GM12878 (cell line): ENCODE measurements at regions of chr2 and their contacts with region 1.

Region 1: DNA sequence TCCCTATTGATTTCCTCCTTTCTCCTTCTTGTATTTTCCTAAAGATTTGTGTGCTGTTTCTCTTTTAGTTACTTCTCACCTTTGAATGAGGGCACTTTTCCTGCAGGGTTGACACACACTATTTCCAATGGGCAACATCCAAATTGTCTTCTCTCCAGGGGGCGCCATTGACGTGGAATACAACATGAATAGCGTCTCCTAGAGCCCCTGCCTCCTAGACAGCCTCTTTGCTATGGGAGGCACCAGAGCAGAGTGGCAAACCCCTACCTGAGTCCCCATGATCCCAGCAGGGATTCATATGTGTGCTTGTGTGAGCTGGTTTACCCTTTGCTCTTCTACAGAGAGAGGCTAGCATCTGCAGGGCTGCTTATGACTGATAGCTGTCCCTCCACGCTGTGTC is 61.3 kb upstream of the ITSN2 start:
- DNase-seq: no peak
- ATAC-seq: peak; percentile 88
- H3K4me3 ChIP-seq: no peak overlapping the region
- H3K27ac ChIP-seq: no peak overlapping the region
- H3K4me1 ChIP-seq: no peaks in the 10 kb centered on the region
- H3K27me3 ChIP-seq: no peaks in the 10 kb centered on the region; a peak in 1 of 4 replicates
- CTCF ChIP-seq: peak; percentile 45 to 68 (median 60); a peak in 5 of 6 replicates
- EP300 ChIP-seq: no peak
- POLR2A ChIP-seq: no peak
- RAD21 ChIP-seq: peak; percentile 71

Region 2: GRCh38 chr2:24435391-24436316 is 14.0 kb after region 1 on chr2:
- CTCF ChIA-PET with region 1: interaction called, 29 read pairs
- POLR2A ChIA-PET with region 1: no interaction called
- RAD21 ChIA-PET with region 1: interaction called, 7 read pairs
- SMC1A ChIA-PET with region 1: interaction called, 20 read pairs
- in situ Hi-C with region 1: no loop called
- intact Hi-C with region 1: no loop called
- DNase-seq: no peak
- ATAC-seq: no peak
- H3K4me3 ChIP-seq: no peak overlapping the region
- H3K27ac ChIP-seq: no peak overlapping the region
- H3K4me1 ChIP-seq: no peaks in the 10 kb centered on the region
- H3K27me3 ChIP-seq: no peaks in the 10 kb centered on the region
- CTCF ChIP-seq: no peak
- EP300 ChIP-seq: no peak
- POLR2A ChIP-seq: no peak
- RAD21 ChIP-seq: no peak

Region 3: GRCh38 chr2:24527536-24527935 is 105.9 kb after region 1 on chr2:
- CTCF ChIA-PET with region 1: no interaction called
- POLR2A ChIA-PET with region 1: no interaction called
- RAD21 ChIA-PET with region 1: no interaction called
- SMC1A ChIA-PET with region 1: no interaction called
- in situ Hi-C with region 1: no loop called
- intact Hi-C with region 1: no loop called
- DNase-seq: no peak
- ATAC-seq: no peak
- H3K4me3 ChIP-seq: no peak overlapping the region
- H3K27ac ChIP-seq: no peak overlapping the region
- H3K4me1 ChIP-seq: no peaks in the 10 kb centered on the region
- H3K27me3 ChIP-seq: no peaks in the 10 kb centered on the region
- CTCF ChIP-seq: no peak
- EP300 ChIP-seq: no peak
- POLR2A ChIP-seq: no peak
- RAD21 ChIP-seq: no peak

Region 4: DNA sequence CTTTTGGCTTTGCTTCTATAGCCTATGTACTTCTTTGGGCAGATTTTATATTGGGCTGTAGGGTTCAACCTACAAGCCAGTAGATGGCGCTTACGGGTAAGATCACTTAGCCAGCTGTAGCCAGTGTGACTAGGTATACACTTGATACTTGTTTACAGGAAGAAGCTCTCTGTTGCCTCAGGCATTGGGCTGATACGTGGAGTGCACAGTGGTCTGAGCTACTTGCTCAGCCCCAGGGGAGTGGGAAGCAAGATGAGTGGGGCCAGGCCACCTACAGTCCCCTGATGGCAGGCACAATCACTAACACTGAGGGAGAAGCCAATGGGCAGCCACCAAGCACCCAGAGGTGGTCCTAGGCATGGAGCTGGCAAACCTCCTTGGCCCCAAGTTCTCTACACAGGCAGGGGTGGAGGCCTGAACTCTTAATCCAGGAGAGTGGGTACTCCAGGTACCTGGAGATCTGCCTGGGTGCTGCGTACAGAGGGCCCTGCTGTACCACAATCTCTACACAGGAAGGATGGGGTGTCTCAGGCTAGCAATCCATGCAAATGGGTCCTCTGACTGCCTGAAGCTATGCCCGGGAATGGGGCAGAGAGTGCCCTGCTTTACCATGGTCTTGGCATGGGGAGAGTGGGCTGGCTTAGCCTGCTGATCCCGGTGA is 191.6 kb after region 1 on chr2:
- CTCF ChIA-PET with region 1: interaction called, 25 read pairs
- POLR2A ChIA-PET with region 1: no interaction called
- RAD21 ChIA-PET with region 1: interaction called, 4 read pairs
- SMC1A ChIA-PET with region 1: interaction called, 13 read pairs
- in situ Hi-C with region 1: no loop called
- intact Hi-C with region 1: no loop called
- DNase-seq: peak; percentile 32
- ATAC-seq: peak; percentile 96
- H3K4me3 ChIP-seq: no peak overlapping the region
- H3K27ac ChIP-seq: peak overlapping the region; percentile 17
- H3K4me1 ChIP-seq: peaks cover 15% of the 10 kb centered on the region
- H3K27me3 ChIP-seq: no peaks in the 10 kb centered on the region
- CTCF ChIP-seq: peak; percentile 52 to 69 (median 59)
- EP300 ChIP-seq: no peak
- POLR2A ChIP-seq: no peak
- RAD21 ChIP-seq: peak; percentile 64

Region 5: GRCh38 chr2:24827321-24828237 is 405.9 kb after region 1 on chr2:
- CTCF ChIA-PET with region 1: interaction called, 88 read pairs
- POLR2A ChIA-PET with region 1: interaction called, 4 read pairs
- RAD21 ChIA-PET with region 1: interaction called, 63 read pairs
- SMC1A ChIA-PET with region 1: interaction called, 55 read pairs
- in situ Hi-C with region 1: no loop called
- intact Hi-C with region 1: loop called (anchors 1 kb)
- DNase-seq: peak; percentile 24
- ATAC-seq: peak; percentile 96
- H3K4me3 ChIP-seq: no peak overlapping the region
- H3K27ac ChIP-seq: no peak overlapping the region
- H3K4me1 ChIP-seq: no peaks in the 10 kb centered on the region; the same call in 1 of the 2 replicates
- H3K27me3 ChIP-seq: no peaks in the 10 kb centered on the region
- CTCF ChIP-seq: peak; percentile 92 to 97 (median 92)
- EP300 ChIP-seq: no peak
- POLR2A ChIP-seq: peak; percentile 40; the same call in 1 of the 2 replicates
- RAD21 ChIP-seq: peak; percentile 95